Adrenal gland (tissue), 19 donors: ENCODE measurements at regions of chr10 and their contacts with region 1.

Region 1: GRCh38 chr10:24989867-24990266 is 26.1 kb downstream of the ENKUR start:
- DNase-seq: no peak
- H3K4me3 ChIP-seq: no peak overlapping the region
- H3K27ac ChIP-seq: no peak overlapping the region
- H3K4me1 ChIP-seq: peaks cover 0 to 8% of the 10 kb centered on the region in 2 donors
- H3K27me3 ChIP-seq: no peaks in the 10 kb centered on the region
- CTCF ChIP-seq: peak in 5 of 6 experiments; percentile 17 to 53 (median 47)
- POLR2A ChIP-seq: no peak

Region 2: DNA sequence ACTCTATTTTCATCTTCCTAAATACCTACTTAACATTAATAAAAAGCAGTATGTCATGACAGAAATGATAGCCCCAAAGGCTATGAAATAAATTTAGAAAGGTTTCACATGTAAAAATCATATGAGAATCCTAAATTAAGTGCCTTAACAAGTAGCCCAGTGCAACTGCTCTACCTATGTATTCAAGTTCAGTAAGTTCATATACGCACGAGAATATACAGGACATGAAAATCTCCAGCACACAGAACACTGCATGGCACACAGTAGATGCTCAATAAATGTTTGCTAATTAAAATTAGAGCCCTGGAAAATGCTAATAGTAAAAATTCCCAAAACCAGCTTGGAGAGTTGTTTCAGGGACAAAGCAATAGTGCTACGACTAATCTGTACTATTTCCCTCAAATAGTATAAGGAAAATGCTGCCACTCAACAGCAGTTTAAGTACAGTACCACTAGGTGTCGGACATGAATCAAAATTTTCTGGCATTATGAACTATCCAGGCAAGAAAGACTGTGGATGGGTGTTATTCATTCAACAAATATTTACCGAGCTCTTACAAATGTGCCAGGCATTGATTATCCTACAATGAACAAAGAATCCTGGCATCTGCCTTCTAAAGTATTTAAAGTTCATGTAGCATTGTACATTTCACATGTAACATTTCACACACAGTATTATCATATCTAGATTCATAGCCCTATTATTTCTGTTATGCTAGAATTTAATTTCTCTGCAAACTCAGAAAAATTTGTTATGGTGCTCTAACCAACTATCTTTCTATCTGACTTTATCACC is 347.0 kb before region 1 on chr10:
- intact Hi-C with region 1: loop called in 1 of 2 experiments (anchors 10 kb)
- DNase-seq: no peak
- H3K4me3 ChIP-seq: no peak overlapping the region
- H3K27ac ChIP-seq: no peak overlapping the region
- H3K4me1 ChIP-seq: peaks cover 17 to 30% of the 10 kb centered on the region in 2 donors
- H3K27me3 ChIP-seq: no peaks in the 10 kb centered on the region
- CTCF ChIP-seq: peak; percentile 65 to 84 (median 83)
- POLR2A ChIP-seq: no peak